Activated naive CD4-positive, alpha-beta T cell treated with anti-CD3 and anti-CD28 coated beads, Interleukin-2, amount 10 ng/mL, durations not matched to agents 7 days and 5 days (primary cell): ENCODE measurements at regions of chr16 and their contacts with region 1.

Region 1: GRCh38 chr16:4506450-4506849 is 30.3 kb downstream of the HMOX2 start:
- DNase-seq: peak; percentile 76
- H3K4me3 Mint-ChIP-seq: peak overlapping the region; percentile 61
- H3K27ac Mint-ChIP-seq: peak overlapping the region; percentile 95
- H3K4me1 Mint-ChIP-seq: peaks cover 63% of the 10 kb centered on the region
- H3K27me3 Mint-ChIP-seq: no peaks in the 10 kb centered on the region

Region 2: GRCh38 chr16:4487955-4488498 is 18.4 kb before region 1 on chr16:
- CTCF ChIA-PET with region 1: interaction called, 27 read pairs
- DNase-seq: peak; percentile 31
- H3K4me3 Mint-ChIP-seq: peak overlapping the region; percentile 64
- H3K27ac Mint-ChIP-seq: peak overlapping the region; percentile 96
- H3K4me1 Mint-ChIP-seq: peaks cover 69% of the 10 kb centered on the region
- H3K27me3 Mint-ChIP-seq: no peaks in the 10 kb centered on the region

Region 3: GRCh38 chr16:4537376-4538343 is 31.2 kb after region 1 on chr16:
- CTCF ChIA-PET with region 1: interaction called, 15 read pairs
- DNase-seq: no peak
- H3K4me3 Mint-ChIP-seq: peak overlapping the region; percentile 74
- H3K27ac Mint-ChIP-seq: peak overlapping the region; percentile 53
- H3K4me1 Mint-ChIP-seq: peaks cover 46% of the 10 kb centered on the region
- H3K27me3 Mint-ChIP-seq: peaks cover 22% of the 10 kb centered on the region

Region 4: GRCh38 chr16:4586291-4586690 is 79.8 kb after region 1 on chr16:
- CTCF ChIA-PET with region 1: interaction called, 83 read pairs
- DNase-seq: no peak
- H3K4me3 Mint-ChIP-seq: no peak overlapping the region
- H3K27ac Mint-ChIP-seq: no peak overlapping the region
- H3K4me1 Mint-ChIP-seq: peaks cover 4% of the 10 kb centered on the region
- H3K27me3 Mint-ChIP-seq: peaks cover 41% of the 10 kb centered on the region

Region 5: DNA sequence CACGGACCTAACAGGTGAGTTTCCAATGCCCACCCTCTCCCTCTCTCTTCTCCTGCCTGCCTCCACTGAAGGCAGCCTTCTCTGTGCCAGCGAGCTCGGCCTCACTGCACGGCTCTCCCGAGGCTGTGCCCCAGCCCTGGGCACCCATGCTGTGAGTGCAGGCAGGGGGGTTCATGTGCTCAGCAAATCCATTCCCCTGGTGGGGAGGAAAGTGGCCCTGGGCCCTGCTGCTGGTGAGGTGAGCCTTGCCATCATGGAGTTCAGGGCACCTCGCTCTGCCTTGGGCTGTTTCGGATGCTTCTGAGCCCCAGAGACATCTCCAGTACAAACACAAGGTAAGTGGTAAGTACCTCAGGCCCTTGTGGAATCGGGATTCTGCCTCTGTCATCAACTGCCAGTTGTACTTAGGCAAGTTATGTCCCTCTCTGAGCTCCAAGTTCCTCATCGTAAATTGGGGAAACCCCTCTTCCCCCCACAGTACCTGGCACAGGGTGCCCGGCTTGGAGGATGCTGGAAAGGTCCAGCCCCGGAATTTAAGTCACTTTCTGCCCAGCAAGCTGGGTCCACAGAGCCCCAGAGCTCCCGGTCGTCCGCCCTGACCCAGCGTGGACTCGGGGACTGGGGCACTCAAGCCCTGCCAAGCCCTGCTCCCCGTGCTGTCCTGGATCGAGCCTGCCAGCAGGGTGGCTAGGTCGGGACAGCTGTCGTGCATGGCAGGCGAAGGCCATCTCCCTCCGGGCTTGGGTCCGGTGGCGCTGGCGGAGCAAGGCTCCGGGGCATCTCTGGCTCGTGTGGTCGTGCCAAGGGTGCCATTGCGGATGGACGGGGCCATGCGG is 186.2 kb after region 1 on chr16:
- CTCF ChIA-PET with region 1: no interaction called
- DNase-seq: no peak
- H3K4me3 Mint-ChIP-seq: peak overlapping the region; percentile 81
- H3K27ac Mint-ChIP-seq: peak overlapping the region; percentile 88
- H3K4me1 Mint-ChIP-seq: peaks cover 16% of the 10 kb centered on the region
- H3K27me3 Mint-ChIP-seq: no peaks in the 10 kb centered on the region